ENCODE measurements at regions of chr19 and their contacts with region 1.

Region 1: DNA sequence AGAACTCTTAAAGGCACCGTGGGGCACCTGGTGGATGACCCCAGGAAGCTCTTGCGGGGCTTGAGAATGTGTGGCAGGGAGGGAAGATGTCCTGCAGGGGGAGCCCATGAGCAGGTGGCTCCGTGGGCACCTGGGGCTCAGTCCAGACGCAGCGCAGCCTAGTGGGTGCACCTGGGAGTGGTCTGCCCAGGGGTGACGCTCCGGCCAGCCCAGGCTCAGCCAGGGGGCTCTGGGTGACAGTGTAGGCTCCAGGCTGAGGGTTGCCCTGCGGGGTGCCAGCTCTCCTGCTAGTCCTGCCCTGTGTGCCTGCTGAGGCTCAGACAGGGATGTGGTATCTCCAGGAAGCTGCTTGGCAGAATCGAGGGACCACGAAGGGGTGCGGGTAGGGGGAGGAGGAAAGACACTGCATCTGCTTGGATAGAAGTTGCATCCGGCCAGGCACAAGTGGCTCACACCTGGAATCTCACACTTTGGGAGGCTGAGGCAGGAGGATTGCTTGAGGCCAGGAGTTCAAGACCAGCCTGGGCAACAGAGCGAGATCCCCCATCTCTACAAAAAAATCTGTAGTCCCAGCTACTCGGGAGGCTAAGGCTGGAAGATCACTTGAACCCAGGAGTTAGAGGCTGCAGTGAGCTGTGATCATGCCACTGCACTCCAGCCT is 15.0 kb upstream of the PGLS start:
- DNase-seq: peak; percentile 90
- ATAC-seq: peak; percentile 97
- H3K4me3 Mint-ChIP-seq: peak overlapping the region; percentile 20
- H3K27ac Mint-ChIP-seq: peak overlapping the region; percentile 32
- H3K4me1 Mint-ChIP-seq: peaks cover 24% of the 10 kb centered on the region
- H3K27me3 Mint-ChIP-seq: no peaks in the 10 kb centered on the region

Region 2: DNA sequence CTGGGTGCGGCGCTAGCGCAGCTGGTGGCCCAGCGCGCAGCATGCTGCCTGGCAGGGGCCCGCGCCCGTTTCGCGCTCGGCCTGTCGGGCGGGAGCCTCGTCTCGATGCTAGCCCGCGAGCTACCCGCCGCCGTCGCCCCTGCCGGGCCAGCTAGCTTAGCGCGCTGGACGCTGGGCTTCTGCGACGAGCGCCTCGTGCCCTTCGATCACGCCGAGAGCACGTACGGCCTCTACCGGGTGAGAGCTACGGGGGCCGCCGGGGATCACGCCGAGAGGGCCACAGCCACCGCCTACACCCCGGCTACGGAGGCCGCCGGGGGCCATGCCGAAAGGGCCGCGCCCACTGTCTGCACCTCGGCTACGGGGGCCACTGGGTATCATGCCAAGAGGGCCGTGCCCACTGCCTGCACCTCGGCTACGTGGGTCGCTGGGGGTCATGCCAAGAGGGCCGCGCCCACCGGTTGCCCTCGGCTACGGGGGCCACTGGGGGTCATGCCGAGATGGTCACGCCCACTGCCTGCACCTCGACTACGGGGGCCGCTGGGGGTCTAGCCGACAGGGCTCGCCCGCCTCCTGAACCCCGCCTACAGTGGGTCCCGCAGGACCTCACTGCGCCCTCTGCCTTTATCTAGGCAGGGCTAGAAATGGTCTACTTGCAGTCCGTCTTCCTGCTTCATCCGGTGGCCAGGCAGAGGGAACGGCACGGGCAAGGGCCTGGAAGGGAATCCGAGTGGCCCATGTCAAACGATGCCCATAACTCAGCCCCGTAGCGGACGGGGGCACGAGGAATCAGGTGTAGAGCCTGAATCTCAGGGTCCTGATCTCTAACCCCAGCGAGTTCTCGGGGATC is 15.5 kb after region 1 on chr19:
- CTCF ChIA-PET with region 1: interaction called, 84 read pairs
- DNase-seq: peak; percentile 95
- ATAC-seq: peak; percentile 76
- H3K4me3 Mint-ChIP-seq: peak overlapping the region; percentile 95
- H3K27ac Mint-ChIP-seq: peak overlapping the region; percentile 96
- H3K4me1 Mint-ChIP-seq: peaks cover 39% of the 10 kb centered on the region
- H3K27me3 Mint-ChIP-seq: no peaks in the 10 kb centered on the region

Region 3: GRCh38 chr19:17549085-17549740 is 52.7 kb after region 1 on chr19:
- CTCF ChIA-PET with region 1: interaction called, 11 read pairs
- DNase-seq: no peak
- ATAC-seq: no peak
- H3K4me3 Mint-ChIP-seq: no peak overlapping the region
- H3K27ac Mint-ChIP-seq: no peak overlapping the region
- H3K4me1 Mint-ChIP-seq: no peaks in the 10 kb centered on the region
- H3K27me3 Mint-ChIP-seq: no peaks in the 10 kb centered on the region

Region 4: GRCh38 chr19:17576759-17577473 is 80.4 kb after region 1 on chr19:
- CTCF ChIA-PET with region 1: interaction called, 30 read pairs
- DNase-seq: peak; percentile 45
- ATAC-seq: peak; percentile 41
- H3K4me3 Mint-ChIP-seq: no peak overlapping the region
- H3K27ac Mint-ChIP-seq: no peak overlapping the region
- H3K4me1 Mint-ChIP-seq: peaks cover 2% of the 10 kb centered on the region
- H3K27me3 Mint-ChIP-seq: no peaks in the 10 kb centered on the region

Measured in activated CD8-positive, alpha-beta memory T cell treated with anti-CD3 and anti-CD28 coated beads, Interleukin-2, amount 10 ng/mL, durations not matched to agents 7 days and 5 days (primary cell).